ENCODE measurements at regions of chr12 and their contacts with region 1.

Region 1: DNA sequence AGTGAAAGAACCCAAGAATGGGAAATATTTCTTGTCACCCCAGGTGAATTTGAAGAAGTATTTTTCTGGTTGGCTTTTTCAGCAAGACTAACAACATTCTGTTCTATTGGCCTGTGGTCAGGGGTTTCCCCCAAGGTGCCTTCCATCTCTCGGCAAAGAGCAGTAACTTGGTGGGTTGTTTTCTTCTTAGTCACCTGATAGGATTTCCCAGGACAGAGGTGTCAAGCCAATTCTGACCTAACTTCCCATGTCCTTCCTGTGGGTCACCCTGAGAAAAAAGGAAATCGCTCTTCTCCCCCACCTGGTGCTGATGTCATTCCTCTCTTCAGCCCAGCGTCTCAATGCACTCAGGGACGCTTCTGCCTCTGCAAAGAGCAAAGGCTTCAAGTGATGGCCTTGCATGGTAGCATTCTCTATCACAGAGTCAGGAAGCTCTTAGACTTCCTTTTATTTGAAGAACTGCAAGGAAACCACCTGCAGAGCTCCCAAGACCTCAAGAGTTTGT is 16.1 kb upstream of the IFNG start:
- DNase-seq: peak; percentile 75
- H3K4me3 Mint-ChIP-seq: peak overlapping the region; percentile 60
- H3K27ac Mint-ChIP-seq: peak overlapping the region; percentile 69
- H3K4me1 Mint-ChIP-seq: peaks cover 60% of the 10 kb centered on the region
- H3K27me3 Mint-ChIP-seq: no peaks in the 10 kb centered on the region

Region 2: DNA sequence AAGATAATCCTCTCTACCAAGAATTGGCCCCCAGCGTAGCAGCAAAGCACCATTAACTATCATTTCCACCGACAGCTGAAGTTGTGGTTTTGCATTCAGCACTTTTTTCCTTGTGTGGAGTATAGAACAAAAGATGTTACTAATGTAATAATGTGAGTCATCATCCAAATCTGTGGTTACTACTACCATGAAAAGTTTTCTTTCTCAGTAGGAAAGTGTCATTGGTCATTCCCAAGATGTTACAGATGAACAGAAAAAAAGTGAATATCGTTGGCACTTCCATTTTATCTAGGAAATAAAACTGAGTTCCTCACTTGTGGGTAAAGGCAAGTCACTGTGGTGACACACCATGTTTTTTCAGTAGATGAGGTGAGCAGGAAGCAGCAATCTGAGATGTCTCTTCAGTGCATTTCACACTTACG is 14.2 kb after region 1 on chr12:
- CTCF ChIA-PET with region 1: interaction called, 4 read pairs
- POLR2A ChIA-PET with region 1: interaction called, 4 read pairs
- intact Hi-C with region 1: loop called (anchors 1 kb)
- DNase-seq: peak; percentile 59
- H3K4me3 Mint-ChIP-seq: no peak overlapping the region
- H3K27ac Mint-ChIP-seq: no peak overlapping the region
- H3K4me1 Mint-ChIP-seq: peaks cover 15% of the 10 kb centered on the region
- H3K27me3 Mint-ChIP-seq: peaks cover 2% of the 10 kb centered on the region

Region 3: DNA sequence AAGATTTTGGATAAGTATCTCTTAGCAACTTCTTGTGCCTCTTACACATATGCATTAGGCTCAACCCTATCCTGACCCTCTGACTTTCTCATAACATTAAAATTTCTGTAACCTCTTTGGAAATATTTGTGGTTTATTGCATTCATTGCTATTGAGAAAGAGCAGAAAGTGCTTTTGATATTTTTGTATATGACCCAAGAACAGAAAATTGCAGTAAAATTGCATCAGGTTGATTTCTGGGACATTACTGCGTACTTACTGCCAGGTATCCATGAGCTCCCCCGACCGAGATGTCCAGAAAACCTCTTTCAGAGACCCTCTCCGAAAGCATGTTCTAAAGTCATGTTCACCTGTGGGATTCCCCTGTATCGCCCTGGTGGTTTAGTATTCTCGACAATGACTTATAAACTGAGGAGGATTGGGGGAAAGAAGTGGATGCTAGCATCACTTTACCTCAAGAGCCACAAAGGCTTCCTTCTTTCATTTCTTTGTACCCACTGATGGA is 92.3 kb after region 1 on chr12:
- CTCF ChIA-PET with region 1: no interaction called
- POLR2A ChIA-PET with region 1: no interaction called
- intact Hi-C with region 1: no loop called
- DNase-seq: no peak
- H3K4me3 Mint-ChIP-seq: no peak overlapping the region
- H3K27ac Mint-ChIP-seq: no peak overlapping the region
- H3K4me1 Mint-ChIP-seq: peaks cover 22% of the 10 kb centered on the region
- H3K27me3 Mint-ChIP-seq: peaks cover 44% of the 10 kb centered on the region